ENCODE measurements at regions of chr3 and their contacts with region 1.

Region 1: DNA sequence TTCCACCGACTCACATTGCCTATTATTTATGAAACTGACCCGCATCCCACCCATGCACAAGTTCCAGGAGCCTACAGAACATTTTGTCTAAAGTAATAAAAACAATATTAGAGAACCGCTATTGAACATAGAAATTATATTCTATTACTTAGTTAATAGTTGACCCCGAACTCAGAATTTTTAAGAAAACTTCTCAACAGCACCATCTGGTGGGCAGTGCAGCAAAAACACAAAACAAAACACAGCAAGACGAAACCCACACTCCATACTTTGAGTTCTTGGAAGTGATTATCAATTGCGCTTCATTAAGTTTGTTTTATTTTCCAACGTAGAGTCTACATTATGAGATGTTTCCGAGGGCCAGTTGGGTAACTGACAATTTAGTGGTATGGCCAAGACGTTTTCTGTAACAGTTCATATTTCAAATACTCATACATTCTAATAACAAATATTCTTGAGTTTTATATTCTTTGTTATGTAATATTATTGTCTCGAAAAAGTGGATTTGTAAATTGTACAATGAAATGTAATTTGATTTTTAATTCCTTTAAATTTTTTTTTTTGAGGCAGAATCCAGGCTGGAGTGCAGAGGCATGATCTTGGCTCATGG is 24.0 kb upstream of the C3orf70 start:
- DNase-seq: peak; percentile 37
- CTCF ChIP-seq: peak; percentile 62

Region 2: DNA sequence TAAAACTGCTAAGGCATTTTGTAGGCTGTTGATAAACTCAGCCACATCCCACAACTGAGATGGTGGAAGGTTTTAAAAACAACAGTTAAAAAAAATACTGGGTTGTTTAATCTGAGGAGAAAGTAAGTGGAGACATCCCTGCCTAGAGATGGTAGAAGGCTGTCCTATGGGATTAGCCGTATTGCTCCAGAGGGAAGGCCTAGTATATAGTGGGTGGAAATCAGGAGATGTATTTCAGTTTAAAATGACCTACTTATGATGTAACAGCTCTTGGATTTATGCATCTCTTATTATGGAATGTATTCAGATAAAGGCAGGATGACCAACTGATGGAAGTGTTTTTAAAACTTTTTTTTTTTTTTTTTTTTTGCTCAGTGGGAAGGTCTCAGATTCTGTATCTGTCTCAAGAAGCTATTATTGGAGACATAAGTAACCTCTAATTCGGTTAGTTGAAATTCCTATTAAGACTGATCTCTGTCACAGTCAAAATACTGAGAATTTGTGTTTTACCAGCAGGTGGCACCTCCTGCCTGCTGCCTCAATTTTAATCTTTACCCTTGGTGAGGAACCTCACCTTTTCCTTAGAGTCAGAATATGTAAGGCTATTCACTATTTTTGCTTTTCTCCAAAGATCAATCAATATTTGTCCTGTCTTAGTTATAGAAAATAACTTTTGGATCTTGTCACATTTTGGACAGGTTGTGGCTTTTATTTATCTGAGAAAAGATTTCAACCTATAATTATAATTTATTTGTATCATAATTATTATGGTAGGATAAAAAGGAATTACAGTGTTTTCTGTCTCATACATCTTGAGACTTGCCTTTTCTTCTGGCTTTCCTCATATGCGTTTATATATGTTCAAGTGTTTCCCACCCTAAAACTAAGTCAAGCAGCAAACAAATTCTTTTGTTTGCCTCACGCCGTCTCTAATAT is 301.9 kb before region 1 on chr3:
- in situ Hi-C with region 1: loop called (anchors 25 kb)
- DNase-seq: peak; percentile 23
- CTCF ChIP-seq: peak; percentile 63